Activated CD4-positive, alpha-beta T cell treated with anti-CD3 and anti-CD28 coated beads for 36 hours (primary cell): ENCODE measurements at regions of chr1 and their contacts with region 1.

Region 1: DNA sequence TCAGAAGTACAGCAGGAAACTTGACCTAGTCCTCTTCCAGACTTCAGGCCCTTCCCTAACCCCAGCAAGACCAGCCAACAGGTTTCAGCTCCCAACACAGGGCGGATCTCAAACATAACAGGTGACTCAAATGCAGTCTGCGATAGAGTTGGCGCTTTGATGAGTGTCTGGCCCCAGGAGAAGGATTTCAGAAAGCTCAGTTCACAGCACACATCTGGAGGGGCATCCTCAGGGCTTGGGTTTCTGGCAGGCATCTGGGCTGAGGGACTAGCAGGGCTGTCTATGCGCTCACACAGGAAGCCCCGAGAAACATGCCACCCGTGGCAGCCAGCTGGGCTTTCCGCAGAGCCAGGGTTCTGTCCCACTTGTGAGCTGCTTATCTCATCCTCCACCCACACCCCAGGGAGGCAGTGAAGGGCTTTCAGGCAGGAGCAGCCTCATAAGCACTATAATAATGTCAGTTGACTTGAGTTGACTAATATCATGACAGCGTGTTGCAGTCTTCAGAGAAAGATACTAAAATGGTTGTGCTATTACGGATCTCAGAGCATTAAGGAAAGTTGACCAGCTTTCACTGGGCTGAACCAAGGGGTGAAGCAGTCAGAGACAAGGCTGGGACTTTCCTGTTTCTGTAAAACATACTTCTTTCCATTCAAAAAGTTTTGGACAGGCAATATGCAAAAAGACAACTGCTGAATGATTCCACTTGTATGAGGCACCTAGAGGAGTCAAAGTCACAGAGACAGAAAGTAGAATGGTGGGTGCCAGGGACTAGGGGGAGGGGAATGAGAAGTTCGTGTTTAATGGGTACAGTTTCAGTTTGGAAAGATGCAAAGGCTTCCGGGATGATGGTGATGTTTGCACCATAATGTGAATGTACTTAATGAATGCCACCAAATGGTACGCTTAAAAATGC is 233.0 kb upstream of the IRF2BP2 start:
- DNase-seq: peak; percentile 93
- ATAC-seq: peak; percentile 83
- H3K4me3 Mint-ChIP-seq: peak overlapping the region; percentile 63
- H3K27ac Mint-ChIP-seq: peak overlapping the region; percentile 94
- H3K4me1 Mint-ChIP-seq: peaks cover 85% of the 10 kb centered on the region
- H3K27me3 Mint-ChIP-seq: no peaks in the 10 kb centered on the region

Region 2: GRCh38 chr1:233945573-233945972 is 897.4 kb before region 1 on chr1:
- CTCF ChIA-PET with region 1: no interaction called
- POLR2A ChIA-PET with region 1: no interaction called
- intact Hi-C with region 1: no loop called
- DNase-seq: peak; percentile 14
- ATAC-seq: no peak
- H3K4me3 Mint-ChIP-seq: no peak overlapping the region
- H3K27ac Mint-ChIP-seq: no peak overlapping the region
- H3K4me1 Mint-ChIP-seq: no peaks in the 10 kb centered on the region
- H3K27me3 Mint-ChIP-seq: peaks cover 16% of the 10 kb centered on the region

Region 3: GRCh38 chr1:234691567-234691966 is 151.4 kb before region 1 on chr1:
- CTCF ChIA-PET with region 1: no interaction called
- POLR2A ChIA-PET with region 1: no interaction called
- intact Hi-C with region 1: no loop called
- DNase-seq: no peak
- ATAC-seq: peak; percentile 93
- H3K4me3 Mint-ChIP-seq: no peak overlapping the region
- H3K27ac Mint-ChIP-seq: no peak overlapping the region
- H3K4me1 Mint-ChIP-seq: no peaks in the 10 kb centered on the region
- H3K27me3 Mint-ChIP-seq: no peaks in the 10 kb centered on the region

Region 4: GRCh38 chr1:234722904-234723720 is 119.9 kb before region 1 on chr1:
- CTCF ChIA-PET with region 1: interaction called, 3 read pairs
- POLR2A ChIA-PET with region 1: interaction called, 8 read pairs
- intact Hi-C with region 1: loop called (anchors 1 kb)
- DNase-seq: peak; percentile 92
- ATAC-seq: peak; percentile 68
- H3K4me3 Mint-ChIP-seq: peak overlapping the region; percentile 64
- H3K27ac Mint-ChIP-seq: peak overlapping the region; percentile 97
- H3K4me1 Mint-ChIP-seq: peaks cover 66% of the 10 kb centered on the region
- H3K27me3 Mint-ChIP-seq: no peaks in the 10 kb centered on the region

Region 5: GRCh38 chr1:234772345-234773147 is 70.4 kb before region 1 on chr1:
- CTCF ChIA-PET with region 1: interaction called, 5 read pairs
- POLR2A ChIA-PET with region 1: interaction called, 5 read pairs
- intact Hi-C with region 1: loop called (anchors 1 kb)
- DNase-seq: peak; percentile 95
- ATAC-seq: peak; percentile 78
- H3K4me3 Mint-ChIP-seq: peak overlapping the region; percentile 45
- H3K27ac Mint-ChIP-seq: peak overlapping the region; percentile 95
- H3K4me1 Mint-ChIP-seq: peaks cover 59% of the 10 kb centered on the region
- H3K27me3 Mint-ChIP-seq: peaks cover 1% of the 10 kb centered on the region

Region 6: GRCh38 chr1:234978397-234979295 is 135.7 kb after region 1 on chr1:
- CTCF ChIA-PET with region 1: no interaction called
- POLR2A ChIA-PET with region 1: interaction called, 4 read pairs
- intact Hi-C with region 1: loop called in 1 of 2 experiments (anchors 1 kb)
- DNase-seq: peak; percentile 80
- ATAC-seq: peak; percentile 62
- H3K4me3 Mint-ChIP-seq: peak overlapping the region; percentile 75
- H3K27ac Mint-ChIP-seq: peak overlapping the region; percentile 98
- H3K4me1 Mint-ChIP-seq: peaks cover 66% of the 10 kb centered on the region
- H3K27me3 Mint-ChIP-seq: no peaks in the 10 kb centered on the region

Region 7: GRCh38 chr1:235878082-235878811 is 1035.3 kb after region 1 on chr1:
- CTCF ChIA-PET with region 1: no interaction called
- POLR2A ChIA-PET with region 1: no interaction called
- intact Hi-C with region 1: loop called in 1 of 2 experiments (anchors 10 kb)
- DNase-seq: no peak
- ATAC-seq: no peak
- H3K4me3 Mint-ChIP-seq: no peak overlapping the region
- H3K27ac Mint-ChIP-seq: no peak overlapping the region
- H3K4me1 Mint-ChIP-seq: peaks cover 68% of the 10 kb centered on the region
- H3K27me3 Mint-ChIP-seq: no peaks in the 10 kb centered on the region